ENCODE measurements at regions of chr16 and their contacts with region 1.

Region 1: GRCh38 chr16:29790183-29790952 is at the start of gene KIF22:
- DNase-seq: peak; percentile 98 to 100 (median 100)
- ATAC-seq: peak; percentile 98
- H3K4me3 ChIP-seq: peak within 1 kb of the TSS; percentile 83
- H3K4me3 Mint-ChIP-seq: peak within 1 kb of the TSS; percentile 92 to 100 (median 98)
- H3K27ac ChIP-seq: peak within 1 kb of the TSS; percentile 88
- H3K27ac Mint-ChIP-seq: peak within 1 kb of the TSS; percentile 93 to 99 (median 99)
- H3K4me1 ChIP-seq: peaks cover 21 to 29% of the 10 kb centered on the region in 2 donors
- H3K4me1 Mint-ChIP-seq: peaks cover 23 to 59% (median 46%) of the 10 kb centered on the region in 7 donors
- H3K27me3 ChIP-seq: no peaks in the 10 kb centered on the region
- H3K27me3 Mint-ChIP-seq: peaks cover 0 to 2% (median 0%) of the 10 kb centered on the region in 5 donors
- total RNA-seq, gene KIF22: 62.5 to 141 (median 81.3) TPM

Region 2: DNA sequence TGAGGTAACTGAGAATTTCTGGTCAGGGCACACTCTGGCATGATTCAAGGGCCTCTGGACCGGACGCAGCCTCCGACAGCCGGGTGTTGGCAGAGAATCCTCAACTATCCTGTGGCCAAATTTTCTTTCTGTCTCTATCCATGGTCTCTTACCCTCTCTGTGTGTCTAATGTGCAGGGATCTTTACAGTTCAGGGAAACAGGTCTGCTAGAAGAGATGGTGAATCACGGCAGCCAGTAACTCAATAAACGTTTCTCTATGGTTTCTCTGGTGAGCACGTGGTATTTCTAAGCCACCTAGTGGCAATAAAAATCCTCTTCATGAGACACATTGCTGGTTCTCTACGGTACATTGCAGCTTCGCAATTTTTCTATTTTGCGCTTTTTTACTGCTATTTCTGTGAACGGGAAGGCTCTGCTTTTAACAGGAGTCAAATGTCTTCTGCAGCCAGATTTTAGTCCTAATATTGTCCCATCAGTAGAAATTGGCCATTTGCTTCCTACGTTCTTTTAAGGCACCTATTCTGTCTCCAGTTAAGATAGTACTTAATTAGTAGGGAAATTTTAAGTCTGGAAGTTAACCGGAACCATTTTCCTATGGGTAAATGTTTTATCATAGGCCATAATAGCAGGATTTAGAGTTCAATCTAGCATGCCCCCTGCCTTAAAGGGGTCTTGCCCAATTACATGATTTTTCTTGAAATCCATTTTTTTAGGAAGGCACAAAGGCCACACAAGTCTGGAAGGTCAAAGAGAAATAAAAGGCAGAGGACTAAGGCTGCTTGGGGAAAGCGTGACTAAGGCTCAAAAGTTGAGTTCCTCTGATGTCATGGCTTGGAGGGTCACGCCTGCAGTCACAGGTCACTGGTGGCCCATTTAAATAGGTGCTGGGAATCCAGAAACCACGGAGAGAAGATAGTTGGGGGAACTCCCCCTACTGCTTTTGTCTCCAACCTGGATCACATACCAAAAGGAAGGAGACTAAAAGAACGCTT is 79.8 kb before region 1 on chr16:
- CTCF ChIA-PET with region 1: interaction called, 6 read pairs
- POLR2A ChIA-PET with region 1: interaction called, 12 read pairs
- intact Hi-C with region 1: loop called in 1 of 2 experiments (anchors 2 kb)
- DNase-seq: peak in 7 of 9 donors; percentile 53 to 77 (median 66)
- ATAC-seq: peak; percentile 96
- H3K4me3 ChIP-seq: no peak overlapping the region
- H3K4me3 Mint-ChIP-seq: peak overlapping the region in 2 of 10 donors; percentile 2 to 16
- H3K27ac ChIP-seq: no peak overlapping the region
- H3K27ac Mint-ChIP-seq: peak overlapping the region in 8 of 9 donors; percentile 43 to 89 (median 60)
- H3K4me1 ChIP-seq: peaks cover 6% of the 10 kb centered on the region in 2 donors
- H3K4me1 Mint-ChIP-seq: peaks cover 8 to 15% (median 12%) of the 10 kb centered on the region in 7 donors
- H3K27me3 ChIP-seq: no peaks in the 10 kb centered on the region
- H3K27me3 Mint-ChIP-seq: peaks cover 0 to 18% (median 0%) of the 10 kb centered on the region in 5 donors

Region 3: DNA sequence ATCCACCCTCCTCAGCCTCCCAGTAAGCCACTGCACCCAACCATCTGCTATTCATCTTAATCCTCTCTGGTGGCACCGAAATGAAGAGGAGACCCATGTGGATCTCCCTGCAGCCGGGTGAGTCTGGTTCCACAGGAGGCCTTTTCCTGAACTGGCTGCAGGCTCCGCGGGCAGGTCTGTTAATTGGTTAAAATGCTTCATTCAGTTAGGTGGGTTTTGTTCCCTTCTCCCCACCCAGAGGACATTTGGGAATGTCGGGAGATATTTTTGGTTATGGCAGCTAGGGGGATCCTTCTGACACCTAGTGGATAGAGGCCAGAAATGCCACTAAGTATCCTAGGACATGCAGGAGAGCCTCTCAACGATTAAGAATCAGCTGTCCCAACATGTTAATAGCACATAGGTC is 61.2 kb before region 1 on chr16:
- CTCF ChIA-PET with region 1: interaction called, 8 read pairs
- POLR2A ChIA-PET with region 1: interaction called, 60 read pairs
- intact Hi-C with region 1: loop called in 1 of 2 experiments (anchors 2 kb)
- DNase-seq: no peak
- ATAC-seq: peak; percentile 41
- H3K4me3 ChIP-seq: no peak overlapping the region
- H3K4me3 Mint-ChIP-seq: peak overlapping the region in 1 of 10 donors; percentile 13
- H3K27ac ChIP-seq: no peak overlapping the region
- H3K27ac Mint-ChIP-seq: peak overlapping the region in 3 of 9 donors; percentile 14 to 43 (median 26)
- H3K4me1 ChIP-seq: peaks cover 7 to 9% of the 10 kb centered on the region in 2 donors
- H3K4me1 Mint-ChIP-seq: peaks cover 17 to 45% (median 28%) of the 10 kb centered on the region in 7 donors
- H3K27me3 ChIP-seq: no peaks in the 10 kb centered on the region
- H3K27me3 Mint-ChIP-seq: peaks cover 0 to 22% (median 0%) of the 10 kb centered on the region in 5 donors

Region 4: DNA sequence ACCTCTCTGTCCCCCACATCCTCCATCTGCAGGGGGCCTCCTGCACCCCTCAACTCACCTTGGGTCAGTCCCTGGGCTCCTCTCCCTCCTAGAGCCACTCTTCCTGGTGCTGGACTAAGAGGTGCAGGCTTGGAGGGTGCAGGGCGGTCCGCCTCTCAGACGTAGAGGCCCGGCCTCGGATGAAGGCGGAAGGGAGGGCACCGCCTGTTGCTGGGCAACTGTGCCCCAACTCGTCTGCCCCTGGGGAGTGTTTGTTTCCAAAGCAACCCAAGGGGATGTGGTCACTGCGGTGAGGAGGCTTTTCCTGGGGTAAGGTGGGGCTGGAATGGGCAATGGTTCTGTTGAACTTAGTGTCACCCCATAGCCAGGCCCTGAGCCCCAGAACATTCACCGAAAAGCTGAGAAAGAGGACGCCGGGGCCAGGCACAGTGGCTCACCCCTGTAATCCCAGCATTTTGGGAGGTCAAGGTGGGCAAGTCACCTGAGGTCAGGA is 44.5 kb before region 1 on chr16 and contains the start of gene C16orf54:
- CTCF ChIA-PET with region 1: interaction called, 25 read pairs
- POLR2A ChIA-PET with region 1: interaction called, 79 read pairs
- intact Hi-C with region 1: loop called (anchors 1 kb)
- DNase-seq: peak; percentile 80 to 99 (median 98)
- ATAC-seq: peak; percentile 91
- H3K4me3 ChIP-seq: peak within 1 kb of the TSS; percentile 76
- H3K4me3 Mint-ChIP-seq: peak within 1 kb of the TSS; percentile 96 to 100 (median 99)
- H3K27ac ChIP-seq: peak within 1 kb of the TSS; percentile 99
- H3K27ac Mint-ChIP-seq: peak within 1 kb of the TSS; percentile 95 to 100 (median 99)
- H3K4me1 ChIP-seq: peaks cover 45 to 50% of the 10 kb centered on the region in 2 donors
- H3K4me1 Mint-ChIP-seq: peaks cover 42 to 71% (median 62%) of the 10 kb centered on the region in 7 donors
- H3K27me3 ChIP-seq: no peaks in the 10 kb centered on the region
- H3K27me3 Mint-ChIP-seq: peaks cover 0 to 3% (median 0%) of the 10 kb centered on the region in 5 donors
- total RNA-seq, gene C16orf54: 63.9 to 228 (median 151) TPM

Region 5: DNA sequence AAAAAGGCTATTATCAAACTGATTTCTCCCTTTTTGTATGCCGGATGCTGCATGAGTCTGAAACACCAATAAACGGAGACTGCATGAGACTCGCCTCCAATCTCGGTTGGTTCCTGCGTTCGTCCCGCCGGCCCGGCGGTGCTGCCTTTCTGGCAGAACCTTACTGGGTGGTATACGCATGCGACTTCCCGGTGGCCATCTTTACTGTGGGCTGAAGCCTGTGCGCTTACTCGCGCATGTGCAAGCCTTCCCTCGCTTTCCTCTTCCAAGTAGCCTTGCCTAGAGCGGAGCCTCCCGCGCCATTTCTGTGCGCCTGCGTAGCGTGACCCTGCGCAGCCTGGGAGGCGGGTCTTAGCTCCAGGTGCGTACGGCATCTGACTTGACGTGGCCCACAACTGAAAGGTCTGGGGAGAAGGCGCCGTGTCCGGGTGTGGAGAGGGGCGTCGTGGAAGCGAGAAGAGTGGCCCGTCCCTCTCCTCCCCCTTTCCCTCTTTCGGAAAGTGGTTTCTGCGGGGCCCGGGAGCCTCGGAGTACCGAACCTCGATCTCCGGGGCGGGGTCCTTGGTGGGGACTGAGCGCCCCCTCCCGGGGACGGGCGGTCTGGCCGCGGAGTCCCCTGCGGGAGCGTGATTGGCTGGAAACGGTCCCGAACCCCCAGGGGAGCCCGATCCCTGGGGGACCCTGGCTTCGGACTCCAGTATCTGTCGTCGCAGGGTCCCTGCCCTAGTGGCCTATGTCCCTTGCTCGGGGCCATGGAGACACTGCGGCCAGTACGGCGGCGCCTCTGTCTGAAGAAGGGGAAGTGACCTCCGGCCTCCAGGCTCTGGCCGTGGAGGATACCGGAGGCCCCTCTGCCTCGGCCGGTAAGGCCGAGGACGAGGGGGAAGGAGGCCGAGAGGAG is 25.7 kb after region 1 on chr16 and contains the start of gene PAGR1:
- CTCF ChIA-PET with region 1: interaction called, 4 read pairs
- POLR2A ChIA-PET with region 1: interaction called, 20 read pairs
- intact Hi-C with region 1: loop called (anchors 1 kb)
- DNase-seq: peak; percentile 92 to 99 (median 99)
- ATAC-seq: peak; percentile 87
- H3K4me3 ChIP-seq: peak within 1 kb of the TSS; percentile 99
- H3K4me3 Mint-ChIP-seq: peak within 1 kb of the TSS; percentile 85 to 100 (median 96)
- H3K27ac ChIP-seq: peak within 1 kb of the TSS; percentile 92
- H3K27ac Mint-ChIP-seq: peak within 1 kb of the TSS; percentile 95 to 99 (median 99)
- H3K4me1 ChIP-seq: peaks cover 29 to 41% of the 10 kb centered on the region in 2 donors
- H3K4me1 Mint-ChIP-seq: peaks cover 40 to 75% (median 59%) of the 10 kb centered on the region in 7 donors
- H3K27me3 ChIP-seq: no peaks in the 10 kb centered on the region
- H3K27me3 Mint-ChIP-seq: peaks cover 0 to 22% (median 0%) of the 10 kb centered on the region in 5 donors
- total RNA-seq, gene PAGR1: 17.5 to 42.0 (median 25.7) TPM

Region 6: GRCh38 chr16:29848420-29849297 is 58.3 kb after region 1 on chr16:
- CTCF ChIA-PET with region 1: interaction called, 6 read pairs
- POLR2A ChIA-PET with region 1: interaction called, 13 read pairs
- intact Hi-C with region 1: loop called (anchors 1 to 2 kb)
- DNase-seq: peak; percentile 71 to 87 (median 81)
- ATAC-seq: peak; percentile 96
- H3K4me3 ChIP-seq: no peak overlapping the region
- H3K4me3 Mint-ChIP-seq: no peak overlapping the region
- H3K27ac ChIP-seq: no peak overlapping the region
- H3K27ac Mint-ChIP-seq: peak overlapping the region; percentile 18 to 88 (median 56)
- H3K4me1 ChIP-seq: peaks cover 0 to 7% of the 10 kb centered on the region in 2 donors
- H3K4me1 Mint-ChIP-seq: peaks cover 8 to 17% (median 9%) of the 10 kb centered on the region in 7 donors
- H3K27me3 ChIP-seq: no peaks in the 10 kb centered on the region
- H3K27me3 Mint-ChIP-seq: no peaks in the 10 kb centered on the region